Naive thymus-derived CD4-positive, alpha-beta T cell (primary cell): ENCODE measurements at regions of chr13 and their contacts with region 1.

Region 1: GRCh38 chr13:22278336-22278929 is 607.6 kb downstream of the FGF9 start:
- DNase-seq: peak; percentile 27 to 71 (median 55)
- ATAC-seq: peak; percentile 73
- H3K4me3 ChIP-seq: no peak overlapping the region
- H3K4me3 Mint-ChIP-seq: peak overlapping the region in 1 of 10 donors; percentile 14
- H3K27ac ChIP-seq: no peak overlapping the region
- H3K27ac Mint-ChIP-seq: peak overlapping the region in 2 of 9 donors; percentile 5 to 43
- H3K4me1 ChIP-seq: peaks cover 0 to 4% of the 10 kb centered on the region in 2 donors
- H3K4me1 Mint-ChIP-seq: peaks cover 0 to 21% (median 7%) of the 10 kb centered on the region in 7 donors
- H3K27me3 ChIP-seq: no peaks in the 10 kb centered on the region
- H3K27me3 Mint-ChIP-seq: no peaks in the 10 kb centered on the region

Region 2: DNA sequence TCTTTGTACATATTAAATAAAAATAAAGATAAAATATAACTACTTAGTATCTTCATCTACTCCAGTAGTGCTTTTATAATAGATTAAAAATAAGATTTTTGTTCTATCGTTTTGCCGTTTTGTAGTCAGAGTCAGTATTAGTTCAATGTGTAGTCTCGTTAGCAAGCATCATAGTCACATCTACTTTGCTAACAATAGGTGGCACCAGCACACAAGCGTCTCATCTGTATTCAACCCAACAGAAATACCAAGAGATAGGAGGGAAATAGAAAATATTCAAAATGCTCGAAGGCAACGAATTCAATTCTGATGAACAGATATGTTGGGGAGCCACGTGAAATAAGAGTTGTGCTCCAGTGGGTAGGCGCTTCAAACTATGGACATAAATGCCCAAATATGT is 653.1 kb before region 1 on chr13:
- CTCF ChIA-PET with region 1: interaction called, 4 read pairs
- POLR2A ChIA-PET with region 1: no interaction called
- intact Hi-C with region 1: loop called in 1 of 2 experiments (anchors 1 kb)
- DNase-seq: peak in 5 of 9 donors; percentile 7 to 38 (median 21)
- ATAC-seq: peak; percentile 51
- H3K4me3 ChIP-seq: no peak overlapping the region
- H3K4me3 Mint-ChIP-seq: no peak overlapping the region
- H3K27ac ChIP-seq: no peak overlapping the region
- H3K27ac Mint-ChIP-seq: peak overlapping the region in 1 of 9 donors; percentile 7
- H3K4me1 ChIP-seq: no peaks in the 10 kb centered on the region
- H3K4me1 Mint-ChIP-seq: peaks cover 0 to 6% (median 0%) of the 10 kb centered on the region in 7 donors
- H3K27me3 ChIP-seq: no peaks in the 10 kb centered on the region
- H3K27me3 Mint-ChIP-seq: peaks cover 0 to 18% (median under 1%) of the 10 kb centered on the region in 5 donors

Region 3: GRCh38 chr13:21849323-21849722 is 429.1 kb before region 1 on chr13:
- CTCF ChIA-PET with region 1: no interaction called
- POLR2A ChIA-PET with region 1: no interaction called
- intact Hi-C with region 1: loop called (anchors 1 kb)
- DNase-seq: peak in 6 of 9 donors; percentile 2 to 37 (median 21)
- ATAC-seq: peak; percentile 70
- H3K4me3 ChIP-seq: no peak overlapping the region
- H3K4me3 Mint-ChIP-seq: no peak overlapping the region
- H3K27ac ChIP-seq: no peak overlapping the region
- H3K27ac Mint-ChIP-seq: no peak overlapping the region
- H3K4me1 ChIP-seq: no peaks in the 10 kb centered on the region
- H3K4me1 Mint-ChIP-seq: peaks cover 0 to 6% (median 2%) of the 10 kb centered on the region in 7 donors
- H3K27me3 ChIP-seq: no peaks in the 10 kb centered on the region
- H3K27me3 Mint-ChIP-seq: no peaks in the 10 kb centered on the region

Region 4: GRCh38 chr13:21913010-21913409 is 365.4 kb before region 1 on chr13:
- CTCF ChIA-PET with region 1: no interaction called
- POLR2A ChIA-PET with region 1: no interaction called
- intact Hi-C with region 1: loop called (anchors 2 to 10 kb)
- DNase-seq: no peak
- ATAC-seq: no peak
- H3K4me3 ChIP-seq: no peak overlapping the region
- H3K4me3 Mint-ChIP-seq: no peak overlapping the region
- H3K27ac ChIP-seq: no peak overlapping the region
- H3K27ac Mint-ChIP-seq: no peak overlapping the region
- H3K4me1 ChIP-seq: no peaks in the 10 kb centered on the region
- H3K4me1 Mint-ChIP-seq: no peaks in the 10 kb centered on the region
- H3K27me3 ChIP-seq: no peaks in the 10 kb centered on the region
- H3K27me3 Mint-ChIP-seq: peaks cover 0 to 3% (median 0%) of the 10 kb centered on the region in 5 donors

Region 5: DNA sequence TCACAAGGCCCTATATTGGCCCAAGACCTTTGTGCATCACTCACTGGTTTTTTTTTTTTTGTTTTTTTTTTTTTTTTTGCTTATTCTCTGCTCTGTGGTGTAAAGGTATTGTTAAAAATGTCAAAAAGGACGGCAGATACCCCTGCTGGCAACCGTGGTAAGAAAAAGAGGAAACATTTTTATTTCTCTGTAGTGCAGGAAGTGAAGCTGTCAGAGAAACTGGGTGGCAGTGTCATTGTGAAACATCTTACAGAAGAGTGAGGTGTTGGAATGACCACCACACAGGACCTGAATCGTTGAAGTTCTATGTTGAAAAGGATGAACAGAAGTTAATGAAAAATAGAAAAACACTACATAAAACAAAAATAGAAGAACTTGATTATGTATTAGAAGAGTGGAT is 261.2 kb before region 1 on chr13:
- CTCF ChIA-PET with region 1: no interaction called
- POLR2A ChIA-PET with region 1: no interaction called
- intact Hi-C with region 1: loop called in 1 of 2 experiments (anchors 2 kb)
- DNase-seq: peak in 2 of 9 donors; percentile 4 to 10
- ATAC-seq: peak; percentile 47
- H3K4me3 ChIP-seq: no peak overlapping the region
- H3K4me3 Mint-ChIP-seq: no peak overlapping the region
- H3K27ac ChIP-seq: no peak overlapping the region
- H3K27ac Mint-ChIP-seq: peak overlapping the region in 3 of 9 donors; percentile 1 to 46 (median 5)
- H3K4me1 ChIP-seq: no peaks in the 10 kb centered on the region
- H3K4me1 Mint-ChIP-seq: peaks cover 5 to 14% (median 10%) of the 10 kb centered on the region in 7 donors
- H3K27me3 ChIP-seq: no peaks in the 10 kb centered on the region
- H3K27me3 Mint-ChIP-seq: no peaks in the 10 kb centered on the region